AG04449 (cell line): ENCODE measurements at regions of chr11 and their contacts with region 1.

Region 1: DNA sequence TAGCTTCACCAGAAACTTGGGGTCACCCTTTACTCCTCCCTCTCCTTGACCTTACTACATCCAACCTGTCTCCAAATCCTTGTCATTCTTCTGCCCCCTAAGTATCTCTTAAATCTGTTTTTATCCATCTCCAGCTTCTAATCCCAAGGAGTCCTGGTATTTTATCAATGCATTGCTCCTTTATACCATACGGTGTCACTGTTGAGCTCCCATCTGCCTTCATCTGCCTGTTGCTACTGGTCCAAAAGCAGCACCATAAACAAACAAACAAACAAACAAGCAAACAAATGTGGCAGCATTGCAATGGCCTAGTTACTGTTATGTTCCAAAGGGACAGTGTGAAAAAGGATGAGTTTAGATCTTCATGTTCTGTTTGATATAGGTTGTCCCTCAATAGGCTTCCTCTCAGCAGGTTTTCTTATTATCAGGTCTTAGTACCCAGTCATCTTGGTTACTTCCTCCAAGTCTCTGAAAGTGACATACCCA is 34.2 kb downstream of the DNHD1 start:
- DNase-seq: no peak
- H3K4me3 ChIP-seq: no peak overlapping the region
- CTCF ChIP-seq: peak; percentile 52

Region 2: DNA sequence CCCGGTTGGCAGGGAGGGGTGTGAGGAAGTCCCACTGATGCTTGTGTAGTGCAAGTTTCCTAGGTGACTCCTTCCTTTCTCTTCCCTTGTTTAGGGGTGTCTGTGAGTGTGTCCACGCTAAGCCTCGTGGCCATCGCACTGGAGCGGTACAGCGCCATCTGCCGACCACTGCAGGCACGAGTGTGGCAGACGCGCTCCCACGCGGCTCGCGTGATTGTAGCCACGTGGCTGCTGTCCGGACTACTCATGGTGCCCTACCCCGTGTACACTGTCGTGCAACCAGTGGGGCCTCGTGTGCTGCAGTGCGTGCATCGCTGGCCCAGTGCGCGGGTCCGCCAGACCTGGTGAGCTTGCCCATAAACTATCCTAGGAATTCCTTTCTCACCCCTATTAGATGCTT is 261.3 kb before region 1 on chr11:
- CTCF ChIA-PET with region 1: no interaction called
- POLR2A ChIA-PET with region 1: no interaction called
- DNase-seq: no peak
- H3K4me3 ChIP-seq: no peak overlapping the region
- CTCF ChIP-seq: no peak

Region 3: GRCh38 chr11:6315811-6316425 is 215.4 kb before region 1 on chr11:
- CTCF ChIA-PET with region 1: no interaction called
- POLR2A ChIA-PET with region 1: no interaction called
- DNase-seq: no peak
- H3K4me3 ChIP-seq: no peak overlapping the region
- CTCF ChIP-seq: peak; percentile 89

Region 4: GRCh38 chr11:6505577-6506240 is 25.6 kb before region 1 on chr11:
- CTCF ChIA-PET with region 1: interaction called, 15 read pairs
- POLR2A ChIA-PET with region 1: no interaction called
- DNase-seq: peak; percentile 36
- H3K4me3 ChIP-seq: no peak overlapping the region
- CTCF ChIP-seq: peak; percentile 46

Region 5: GRCh38 chr11:6554828-6555706 is 23.8 kb after region 1 on chr11:
- CTCF ChIA-PET with region 1: interaction called, 25 read pairs
- POLR2A ChIA-PET with region 1: no interaction called
- DNase-seq: no peak
- H3K4me3 ChIP-seq: no peak overlapping the region
- CTCF ChIP-seq: no peak

Region 6: DNA sequence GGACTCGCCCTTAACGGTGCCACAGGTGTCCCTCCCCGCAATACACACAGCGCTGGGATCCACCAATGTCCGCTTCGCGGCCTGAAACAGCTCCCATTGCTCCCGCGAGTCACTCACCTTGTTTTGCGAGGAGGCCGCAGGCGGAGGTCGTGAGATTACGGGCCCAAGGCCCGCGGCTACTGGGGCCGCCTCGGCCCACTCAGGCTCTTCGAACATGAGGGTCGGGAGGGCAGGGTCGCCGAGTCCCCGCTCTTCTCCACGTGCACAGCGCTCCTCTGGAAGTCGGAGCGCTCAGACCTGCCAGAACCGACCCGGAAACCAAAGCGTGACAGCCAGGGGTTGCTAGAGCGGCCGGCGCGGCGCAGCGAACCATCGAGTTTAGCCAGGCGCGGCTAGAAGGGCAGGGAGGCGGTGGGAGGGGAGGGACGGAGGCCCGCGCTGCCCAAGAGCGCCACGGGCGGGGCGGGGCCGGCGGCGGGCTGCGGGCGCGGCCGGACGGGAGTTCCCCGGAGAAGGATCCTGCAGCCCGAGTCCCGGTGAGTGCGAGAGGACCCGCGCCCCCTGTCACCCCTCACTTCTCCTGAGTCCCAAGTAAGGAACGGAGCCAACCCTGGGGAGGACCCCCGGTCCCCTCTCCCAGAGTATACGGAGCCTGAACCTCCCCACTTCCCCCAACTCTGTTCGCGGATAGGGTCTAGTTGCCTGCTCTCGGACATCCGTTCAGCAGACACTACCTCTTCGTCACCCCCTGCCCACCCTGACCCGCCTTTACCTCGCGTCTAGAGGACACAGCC is 72.2 kb after region 1 on chr11 and contains the starts of genes ILK and RRP8:
- CTCF ChIA-PET with region 1: interaction called, 19 read pairs
- POLR2A ChIA-PET with region 1: no interaction called
- DNase-seq: no peak
- H3K4me3 ChIP-seq: peak within 1 kb of the TSS; percentile 97
- CTCF ChIP-seq: no peak

Region 7: GRCh38 chr11:6619004-6619745 is 87.9 kb after region 1 on chr11 and contains the start of gene TPP1:
- CTCF ChIA-PET with region 1: interaction called, 15 read pairs
- POLR2A ChIA-PET with region 1: no interaction called
- DNase-seq: no peak
- H3K4me3 ChIP-seq: peak within 1 kb of the TSS; percentile 97
- CTCF ChIP-seq: no peak

Region 8: GRCh38 chr11:6682936-6683861 is 151.9 kb after region 1 on chr11 and contains the start of gene MRPL17:
- CTCF ChIA-PET with region 1: interaction called, 75 read pairs
- POLR2A ChIA-PET with region 1: no interaction called
- DNase-seq: peak; percentile 86
- H3K4me3 ChIP-seq: peak within 1 kb of the TSS; percentile 100
- CTCF ChIP-seq: peak; percentile 88

Region 9: DNA sequence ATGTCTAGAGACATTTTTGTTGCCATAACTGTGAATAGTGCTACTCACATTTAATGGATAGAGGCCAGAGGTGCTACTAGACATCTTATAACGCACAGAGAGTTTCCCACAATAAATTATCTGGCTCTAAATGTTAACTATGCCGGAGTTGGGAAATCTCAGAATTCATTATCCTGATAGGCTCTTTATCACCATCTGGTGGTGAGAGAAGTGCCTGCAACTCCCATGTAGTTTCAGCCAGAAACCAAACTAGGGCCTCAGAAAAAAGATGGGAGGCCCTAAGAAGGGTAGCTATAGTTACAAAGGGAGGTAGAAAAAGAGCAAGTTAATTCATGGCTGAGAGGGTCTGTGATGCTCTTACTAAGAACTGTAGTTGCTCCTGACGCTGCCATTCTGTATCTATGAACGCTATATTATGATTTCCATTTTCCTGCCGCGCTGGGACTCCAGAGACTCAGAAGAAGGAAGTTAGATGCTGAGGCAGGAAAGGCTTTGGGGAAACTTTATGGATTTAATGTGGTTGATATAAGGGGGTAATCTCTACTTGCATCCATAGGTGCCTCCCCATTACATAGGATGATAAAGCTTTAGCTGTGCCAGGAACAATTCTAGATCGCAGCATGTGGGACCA is 174.7 kb after region 1 on chr11:
- CTCF ChIA-PET with region 1: interaction called, 40 read pairs
- POLR2A ChIA-PET with region 1: no interaction called
- DNase-seq: no peak
- H3K4me3 ChIP-seq: no peak overlapping the region
- CTCF ChIP-seq: peak; percentile 75